Endothelial cell of umbilical vein (primary cell): ENCODE measurements at regions of chr3 and their contacts with region 1.

Region 1: GRCh38 chr3:188656196-188656982 is 502.4 kb downstream of the LPP start:
- DNase-seq: peak; percentile 46
- H3K4me3 ChIP-seq: no peak overlapping the region
- H3K27ac ChIP-seq: no peak overlapping the region
- H3K4me1 ChIP-seq: peaks cover 13% of the 10 kb centered on the region
- H3K27me3 ChIP-seq: no peaks in the 10 kb centered on the region
- CTCF ChIP-seq: no peak
- POLR2A ChIP-seq: no peak

Region 2: DNA sequence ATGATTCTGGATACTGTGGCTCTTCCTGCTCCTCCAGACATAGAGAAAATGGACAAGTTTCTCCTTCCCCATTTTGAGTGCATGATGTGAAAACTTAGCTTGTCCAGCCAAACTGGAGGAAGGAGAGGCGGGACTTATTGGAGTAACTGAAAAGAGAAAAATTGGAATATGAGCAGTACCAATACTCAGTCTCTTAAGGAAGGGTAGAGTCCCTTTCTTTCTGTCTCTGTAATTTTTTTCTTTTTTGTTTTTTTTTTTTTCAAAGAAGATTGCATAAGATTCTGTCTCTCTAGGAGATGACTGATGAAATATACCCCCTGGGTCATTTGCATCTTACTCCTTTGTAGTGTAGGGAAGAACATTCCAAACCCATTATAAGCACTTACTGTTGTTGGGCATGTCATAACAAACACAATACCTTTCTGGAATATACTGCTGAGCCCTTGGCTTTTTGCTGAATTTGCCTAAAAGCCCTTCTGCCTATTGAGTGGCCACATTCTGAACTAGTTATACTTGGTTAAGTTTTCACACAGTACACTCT is 17.3 kb after region 1 on chr3:
- CTCF ChIA-PET with region 1: no interaction called
- POLR2A ChIA-PET with region 1: no interaction called
- dilution Hi-C with region 1: no loop called
- intact Hi-C with region 1: loop called (anchors 2 kb)
- DNase-seq: no peak
- H3K4me3 ChIP-seq: no peak overlapping the region
- H3K27ac ChIP-seq: no peak overlapping the region
- H3K4me1 ChIP-seq: no peaks in the 10 kb centered on the region
- H3K27me3 ChIP-seq: no peaks in the 10 kb centered on the region
- CTCF ChIP-seq: no peak
- POLR2A ChIP-seq: no peak